ENCODE measurements at regions of chr5 and their contacts with region 1.

Region 1: GRCh38 chr5:33272288-33272687 is 168.5 kb upstream of the TARS1 start:
- DNase-seq: peak; percentile 98
- ATAC-seq: peak; percentile 98
- H3K4me3 ChIP-seq: no peak overlapping the region
- H3K27ac ChIP-seq: peak overlapping the region; percentile 71
- H3K4me1 ChIP-seq: peaks cover 19% of the 10 kb centered on the region
- H3K27me3 ChIP-seq: no peaks in the 10 kb centered on the region
- CTCF ChIP-seq: no peak

Region 2: DNA sequence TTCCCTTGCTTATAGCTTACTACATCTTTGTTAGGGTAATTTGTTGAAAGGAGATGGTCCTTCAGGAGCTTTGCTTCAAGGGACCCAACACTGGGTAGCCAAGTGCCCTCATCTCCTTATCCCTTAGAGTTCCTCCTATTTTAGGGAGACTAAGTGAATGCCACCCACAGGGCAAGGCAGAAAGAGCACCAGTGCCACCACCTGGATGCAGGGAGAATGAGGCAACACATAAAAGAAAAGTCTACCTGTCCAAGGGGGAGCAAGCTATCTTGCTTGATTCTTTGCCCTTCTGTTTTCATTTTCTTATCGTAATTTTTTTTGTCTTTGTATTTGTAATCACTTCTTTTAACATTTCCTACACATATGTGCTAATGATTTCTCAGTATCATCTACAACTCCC is 355.6 kb before region 1 on chr5:
- CTCF ChIA-PET with region 1: no interaction called
- POLR2A ChIA-PET with region 1: no interaction called
- intact Hi-C with region 1: no loop called
- DNase-seq: peak; percentile 80
- ATAC-seq: peak; percentile 92
- H3K4me3 ChIP-seq: no peak overlapping the region
- H3K27ac ChIP-seq: no peak overlapping the region
- H3K4me1 ChIP-seq: no peaks in the 10 kb centered on the region
- H3K27me3 ChIP-seq: no peaks in the 10 kb centered on the region
- CTCF ChIP-seq: peak; percentile 95

Region 3: GRCh38 chr5:33282696-33283095 is 10.4 kb after region 1 on chr5:
- CTCF ChIA-PET with region 1: no interaction called
- POLR2A ChIA-PET with region 1: interaction called, 3 read pairs
- intact Hi-C with region 1: loop called (anchors 1 kb)
- DNase-seq: no peak
- ATAC-seq: no peak
- H3K4me3 ChIP-seq: no peak overlapping the region
- H3K27ac ChIP-seq: no peak overlapping the region
- H3K4me1 ChIP-seq: peaks cover 24% of the 10 kb centered on the region
- H3K27me3 ChIP-seq: no peaks in the 10 kb centered on the region
- CTCF ChIP-seq: no peak

Region 4: GRCh38 chr5:33338336-33339113 is 66.2 kb after region 1 on chr5:
- CTCF ChIA-PET with region 1: no interaction called
- POLR2A ChIA-PET with region 1: no interaction called
- intact Hi-C with region 1: no loop called
- DNase-seq: no peak
- ATAC-seq: no peak
- H3K4me3 ChIP-seq: no peak overlapping the region
- H3K27ac ChIP-seq: no peak overlapping the region
- H3K4me1 ChIP-seq: peaks cover 3% of the 10 kb centered on the region; the same call in 1 of the 2 replicates
- H3K27me3 ChIP-seq: no peaks in the 10 kb centered on the region
- CTCF ChIP-seq: 0 out of 2 replicates have a peak, but pooled peaks have one; percentile 15

Region 5: GRCh38 chr5:33423018-33423630 is 150.8 kb after region 1 on chr5:
- CTCF ChIA-PET with region 1: no interaction called
- POLR2A ChIA-PET with region 1: no interaction called
- intact Hi-C with region 1: loop called (anchors 5 kb)
- DNase-seq: peak; percentile 69
- ATAC-seq: peak; percentile 43; the same call in 1 of the 2 replicates
- H3K4me3 ChIP-seq: no peak overlapping the region
- H3K27ac ChIP-seq: no peak overlapping the region
- H3K4me1 ChIP-seq: no peaks in the 10 kb centered on the region
- H3K27me3 ChIP-seq: no peaks in the 10 kb centered on the region
- CTCF ChIP-seq: peak; percentile 73

Measured in PC-3 (cell line).